BJ (cell line): ENCODE measurements at regions of chr18 and their contacts with region 1.

Region 1: GRCh38 chr18:21191596-21192307 is 50.3 kb upstream of the GREB1L start:
- DNase-seq: no peak
- H3K4me3 ChIP-seq: no peak overlapping the region
- H3K27me3 ChIP-seq: no peaks in the 10 kb centered on the region; the same call in 1 of the 2 replicates
- CTCF ChIP-seq: peak; percentile 89

Region 2: DNA sequence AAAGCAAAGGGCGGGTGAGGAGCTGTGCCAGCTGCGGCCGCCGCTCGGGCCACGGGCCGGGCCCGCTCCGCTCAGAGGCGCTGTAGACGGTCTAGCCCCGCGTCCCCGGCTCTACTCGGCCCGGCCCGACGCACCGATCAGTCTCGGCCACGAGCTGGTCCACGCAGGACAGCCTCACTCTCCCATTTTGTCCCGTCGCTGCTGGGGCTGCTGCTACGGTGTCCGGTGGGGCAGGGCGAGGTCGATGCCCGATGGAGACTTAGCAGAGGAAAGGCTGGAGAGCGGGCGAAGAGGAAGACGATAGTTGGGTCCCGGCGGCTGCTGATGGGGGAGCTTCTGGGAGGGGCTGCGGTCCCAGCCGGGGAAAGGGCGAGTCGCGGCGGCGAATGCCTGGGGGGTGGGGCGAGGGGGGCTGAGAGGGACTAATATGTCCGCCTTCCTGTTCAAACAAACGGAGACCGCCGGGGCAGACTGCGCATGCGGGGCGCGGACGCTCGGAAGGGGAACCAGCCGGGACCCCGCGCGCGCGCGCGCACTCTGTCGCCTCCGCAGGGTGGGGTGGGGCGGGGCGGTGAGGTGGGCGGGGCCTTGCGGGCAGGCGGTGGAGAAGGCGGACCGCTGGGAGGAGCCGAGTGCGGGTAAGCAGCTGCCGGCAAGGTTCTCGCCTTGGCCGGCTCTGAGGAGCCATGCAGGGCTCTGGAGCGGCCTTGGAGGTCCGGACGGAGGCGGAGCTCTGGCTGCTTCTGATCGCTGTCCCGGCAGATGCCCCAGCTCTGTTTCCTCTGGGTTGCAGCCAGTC is 80.2 kb before region 1 on chr18 and contains the start of gene ROCK1:
- CTCF ChIA-PET with region 1: interaction called, 5 read pairs
- POLR2A ChIA-PET with region 1: interaction called, 14 read pairs
- DNase-seq: peak; percentile 84
- H3K4me3 ChIP-seq: peak within 1 kb of the TSS; percentile 96
- H3K27me3 ChIP-seq: no peaks in the 10 kb centered on the region
- CTCF ChIP-seq: no peak
- polyA plus RNA-seq, gene ROCK1: 11.8 and 27.6 TPM in 2 replicates

Region 3: GRCh38 chr18:21203096-21203495 is 11.3 kb after region 1 on chr18:
- CTCF ChIA-PET with region 1: interaction called, 10 read pairs
- POLR2A ChIA-PET with region 1: no interaction called
- DNase-seq: no peak
- H3K4me3 ChIP-seq: no peak overlapping the region
- H3K27me3 ChIP-seq: no peaks in the 10 kb centered on the region
- CTCF ChIP-seq: no peak

Region 4: GRCh38 chr18:21391074-21391673 is 199.4 kb after region 1 on chr18:
- CTCF ChIA-PET with region 1: no interaction called
- POLR2A ChIA-PET with region 1: no interaction called
- DNase-seq: peak; percentile 49
- H3K4me3 ChIP-seq: no peak overlapping the region
- H3K27me3 ChIP-seq: no peaks in the 10 kb centered on the region
- CTCF ChIP-seq: no peak

Region 5: DNA sequence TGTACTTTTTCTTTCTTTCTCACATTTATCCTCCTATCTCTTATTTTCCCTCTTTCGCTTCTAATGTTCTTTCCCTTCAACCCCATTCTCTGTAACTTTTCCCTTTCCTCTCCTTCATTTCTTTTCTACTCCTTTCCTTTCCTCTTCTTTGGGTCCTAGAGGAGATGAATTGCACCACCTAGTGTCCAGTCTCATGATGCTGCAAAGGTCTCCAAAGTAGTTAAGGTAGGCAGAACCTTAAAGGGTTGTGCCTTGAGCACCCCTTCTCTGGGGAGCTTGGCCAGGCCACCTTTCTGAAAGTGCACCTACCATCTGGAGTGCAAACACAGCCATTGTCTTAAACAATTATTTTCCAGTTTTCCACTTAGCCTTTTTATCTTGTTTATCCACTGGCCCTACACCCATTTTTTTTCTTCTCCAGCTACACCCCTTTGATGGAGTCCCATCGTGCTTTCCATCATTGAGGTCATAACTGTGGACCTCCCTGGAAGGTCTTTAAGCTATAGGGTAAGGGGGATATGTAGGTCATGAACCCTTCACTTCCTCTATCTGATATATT is 252.8 kb after region 1 on chr18:
- CTCF ChIA-PET with region 1: interaction called, 207 read pairs
- POLR2A ChIA-PET with region 1: no interaction called
- DNase-seq: no peak
- H3K4me3 ChIP-seq: no peak overlapping the region
- H3K27me3 ChIP-seq: no peaks in the 10 kb centered on the region
- CTCF ChIP-seq: peak; percentile 84

Region 6: GRCh38 chr18:21489119-21489750 is 297.5 kb after region 1 on chr18:
- CTCF ChIA-PET with region 1: interaction called, 16 read pairs
- POLR2A ChIA-PET with region 1: no interaction called
- DNase-seq: no peak
- H3K4me3 ChIP-seq: no peak overlapping the region
- H3K27me3 ChIP-seq: no peaks in the 10 kb centered on the region
- CTCF ChIP-seq: peak; percentile 79

Region 7: GRCh38 chr18:21682371-21683051 is 490.8 kb after region 1 on chr18:
- CTCF ChIA-PET with region 1: no interaction called
- POLR2A ChIA-PET with region 1: no interaction called
- DNase-seq: peak; percentile 45
- H3K4me3 ChIP-seq: peak overlapping the region; percentile 42
- H3K27me3 ChIP-seq: no peaks in the 10 kb centered on the region
- CTCF ChIP-seq: no peak